Breast epithelium (tissue), 4 donors: ENCODE measurements at regions of chr1 and their contacts with region 1.

Region 1: GRCh38 chr1:6048179-6048867 is 2.6 kb downstream of the KCNAB2 start:
- DNase-seq: no peak
- H3K4me3 ChIP-seq: no peak overlapping the region
- H3K27ac ChIP-seq: no peak overlapping the region
- H3K4me1 ChIP-seq: no peaks in the 10 kb centered on the region
- H3K27me3 ChIP-seq: no peaks in the 10 kb centered on the region
- CTCF ChIP-seq: no peak
- POLR2A ChIP-seq: no peak

Region 2: DNA sequence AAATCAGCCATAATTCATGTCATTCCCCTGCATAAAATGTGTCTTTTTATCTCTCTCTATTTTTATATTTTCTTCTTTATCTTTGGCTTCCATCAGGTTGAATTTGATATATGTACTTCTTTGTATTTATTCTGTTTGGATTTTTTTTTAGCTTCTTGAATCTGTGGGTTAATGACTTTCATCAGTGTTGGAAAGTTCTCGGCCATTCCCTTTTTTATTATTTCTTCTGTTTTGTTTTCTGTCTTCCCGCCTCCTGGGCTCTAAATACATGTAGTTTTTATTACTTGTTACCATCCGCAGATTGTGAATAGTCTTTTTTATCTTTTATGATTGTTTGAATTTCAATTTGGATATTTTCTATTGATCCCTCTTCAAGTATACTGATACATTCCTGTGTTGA is 693.6 kb before region 1 on chr1:
- intact Hi-C with region 1: no loop called
- DNase-seq: no peak
- H3K4me3 ChIP-seq: no peak overlapping the region
- H3K27ac ChIP-seq: no peak overlapping the region
- H3K4me1 ChIP-seq: no peaks in the 10 kb centered on the region
- H3K27me3 ChIP-seq: peaks cover 0 to under 1% of the 10 kb centered on the region in 2 donors
- CTCF ChIP-seq: no peak
- POLR2A ChIP-seq: no peak

Region 3: DNA sequence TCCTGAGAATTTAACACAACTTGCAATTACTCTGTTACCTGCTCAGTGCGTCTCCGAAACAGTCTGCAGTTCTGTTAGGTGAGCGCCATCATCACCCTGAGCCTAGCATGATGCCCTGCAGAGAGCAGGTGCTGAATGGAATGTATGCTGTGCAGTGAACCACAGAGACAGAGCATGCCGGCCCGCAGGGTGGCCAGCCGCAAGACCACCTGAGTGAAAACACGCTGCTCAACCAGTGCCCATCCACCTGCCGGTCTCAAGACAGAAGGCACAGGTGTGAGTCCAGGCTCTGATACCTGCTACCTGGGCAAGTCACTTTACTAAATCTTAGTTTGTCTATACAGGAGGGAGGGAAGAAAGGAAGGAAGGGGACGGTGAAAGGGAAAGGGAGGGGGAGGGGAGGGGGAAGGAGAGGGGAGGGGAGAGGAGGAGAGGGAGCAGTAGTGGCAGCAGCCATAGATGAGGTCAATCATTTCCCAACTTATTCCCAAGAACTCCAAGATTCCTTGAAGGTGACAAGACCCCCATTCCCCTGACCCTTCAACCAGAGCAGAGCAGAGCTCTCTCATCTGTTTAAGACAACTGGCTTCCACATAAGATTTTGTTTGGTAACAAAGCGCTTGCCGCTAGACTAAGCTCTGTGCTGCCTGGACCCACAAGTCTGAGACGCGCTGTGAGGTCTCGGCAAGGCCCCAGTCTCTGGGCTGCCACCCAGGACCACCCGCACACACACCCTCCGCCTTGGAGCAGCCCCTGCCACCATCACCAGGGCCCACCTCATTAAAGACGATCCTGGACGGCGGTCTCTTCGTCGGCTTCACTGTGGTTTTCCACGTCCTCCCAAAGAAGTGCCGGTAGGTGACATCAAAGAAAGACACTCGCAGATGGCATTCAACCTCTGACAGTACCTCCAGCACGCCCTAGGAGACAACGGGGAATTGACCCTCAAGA is 70.6 kb before region 1 on chr1:
- intact Hi-C with region 1: loop called (anchors 2 kb)
- DNase-seq: peak in 1 of 2 donors; percentile 40
- H3K4me3 ChIP-seq: no peak overlapping the region
- H3K27ac ChIP-seq: no peak overlapping the region
- H3K4me1 ChIP-seq: no peaks in the 10 kb centered on the region
- H3K27me3 ChIP-seq: no peaks in the 10 kb centered on the region
- CTCF ChIP-seq: no peak
- POLR2A ChIP-seq: no peak

Region 4: GRCh38 chr1:6059866-6060265 is 11.5 kb after region 1 on chr1:
- intact Hi-C with region 1: no loop called
- DNase-seq: no peak
- H3K4me3 ChIP-seq: no peak overlapping the region
- H3K27ac ChIP-seq: no peak overlapping the region
- H3K4me1 ChIP-seq: peaks cover 3 to 8% of the 10 kb centered on the region in 2 donors
- H3K27me3 ChIP-seq: no peaks in the 10 kb centered on the region
- CTCF ChIP-seq: no peak
- POLR2A ChIP-seq: no peak

Region 5: DNA sequence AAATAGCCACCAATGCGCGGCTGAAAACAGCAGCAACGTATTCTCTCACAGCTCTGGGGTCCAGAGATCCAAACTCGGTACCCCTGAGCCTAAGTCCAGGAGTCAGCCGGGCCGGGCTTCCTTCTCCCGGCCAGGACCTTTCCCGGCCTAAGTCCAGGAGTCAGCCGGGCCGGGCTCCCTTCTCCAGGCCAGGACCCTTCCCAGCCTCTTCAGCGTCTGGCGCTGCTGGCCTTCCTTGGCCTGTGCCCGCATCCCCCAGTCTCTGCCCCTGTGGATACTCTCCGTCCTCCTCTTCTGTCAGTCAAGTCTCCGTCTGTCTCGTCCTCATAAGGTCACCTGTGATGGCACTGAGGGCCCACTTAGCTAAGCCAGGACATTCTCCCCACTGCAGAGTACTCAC is 29.6 kb after region 1 on chr1:
- intact Hi-C with region 1: loop called (anchors 2 kb)
- DNase-seq: no peak
- H3K4me3 ChIP-seq: no peak overlapping the region
- H3K27ac ChIP-seq: no peak overlapping the region
- H3K4me1 ChIP-seq: no peaks in the 10 kb centered on the region
- H3K27me3 ChIP-seq: no peaks in the 10 kb centered on the region
- CTCF ChIP-seq: no peak
- POLR2A ChIP-seq: no peak

Region 6: GRCh38 chr1:6090996-6091822 is 42.9 kb after region 1 on chr1:
- intact Hi-C with region 1: no loop called
- DNase-seq: no peak
- H3K4me3 ChIP-seq: no peak overlapping the region
- H3K27ac ChIP-seq: no peak overlapping the region
- H3K4me1 ChIP-seq: no peaks in the 10 kb centered on the region
- H3K27me3 ChIP-seq: no peaks in the 10 kb centered on the region
- CTCF ChIP-seq: no peak
- POLR2A ChIP-seq: no peak